Activated CD8-positive, alpha-beta T cell treated with anti-CD3 and anti-CD28 coated beads for 36 hours (primary cell): ENCODE measurements at regions of chr22 and their contacts with region 1.

Region 1: GRCh38 chr22:20783844-20784723 is 10.2 kb downstream of the SERPIND1 start:
- DNase-seq: peak; percentile 72
- ATAC-seq: peak; percentile 70
- H3K4me3 Mint-ChIP-seq: no peak overlapping the region
- H3K27ac Mint-ChIP-seq: no peak overlapping the region
- H3K4me1 Mint-ChIP-seq: peaks cover 18% of the 10 kb centered on the region
- H3K27me3 Mint-ChIP-seq: no peaks in the 10 kb centered on the region
- CTCF ChIP-seq: peak; percentile 64

Region 2: DNA sequence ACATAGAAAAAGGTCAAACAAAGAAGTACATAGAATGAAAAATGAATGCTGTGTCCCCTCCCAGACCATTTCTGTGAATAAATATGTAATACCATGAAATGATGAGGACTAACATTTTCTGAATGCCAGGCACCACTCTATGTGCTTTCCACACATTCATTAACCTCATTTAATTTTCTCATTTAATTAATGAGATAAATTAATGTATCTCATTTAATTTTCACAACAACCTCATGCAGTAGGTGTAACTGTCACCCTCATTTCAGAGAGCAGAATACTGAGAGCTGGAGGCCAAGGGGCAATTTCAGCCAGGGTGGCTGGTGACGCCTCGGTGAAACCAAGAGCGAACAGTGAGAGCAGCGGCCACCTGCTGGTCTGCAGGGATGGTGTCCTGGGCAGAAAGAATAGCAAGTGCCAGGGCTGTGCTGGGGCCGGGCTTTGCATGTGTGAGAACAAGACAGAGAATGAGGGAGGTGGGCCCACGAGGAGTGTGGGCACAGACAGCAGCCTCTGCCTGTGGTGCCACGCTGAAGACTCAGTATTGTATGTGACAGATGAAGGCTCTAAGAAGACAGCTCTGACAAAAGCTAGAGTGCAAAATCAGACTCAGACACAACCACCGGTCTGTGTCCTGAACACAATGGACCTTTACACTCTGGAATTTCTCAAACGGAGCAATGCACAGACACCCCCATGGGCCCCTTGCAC is 12.0 kb before region 1 on chr22:
- CTCF ChIA-PET with region 1: interaction called, 25 read pairs
- POLR2A ChIA-PET with region 1: interaction called, 3 read pairs
- intact Hi-C with region 1: no loop called
- DNase-seq: no peak
- ATAC-seq: no peak
- H3K4me3 Mint-ChIP-seq: no peak overlapping the region
- H3K27ac Mint-ChIP-seq: no peak overlapping the region
- H3K4me1 Mint-ChIP-seq: no peaks in the 10 kb centered on the region
- H3K27me3 Mint-ChIP-seq: no peaks in the 10 kb centered on the region
- CTCF ChIP-seq: no peak

Region 3: GRCh38 chr22:20799460-20799859 is 15.4 kb after region 1 on chr22:
- CTCF ChIA-PET with region 1: interaction called, 57 read pairs
- POLR2A ChIA-PET with region 1: interaction called, 3 read pairs
- intact Hi-C with region 1: no loop called
- DNase-seq: no peak
- ATAC-seq: no peak
- H3K4me3 Mint-ChIP-seq: no peak overlapping the region
- H3K27ac Mint-ChIP-seq: no peak overlapping the region
- H3K4me1 Mint-ChIP-seq: no peaks in the 10 kb centered on the region
- H3K27me3 Mint-ChIP-seq: no peaks in the 10 kb centered on the region
- CTCF ChIP-seq: no peak

Region 4: GRCh38 chr22:20844055-20845037 is 60.3 kb after region 1 on chr22:
- CTCF ChIA-PET with region 1: no interaction called
- POLR2A ChIA-PET with region 1: no interaction called
- intact Hi-C with region 1: no loop called
- DNase-seq: no peak
- ATAC-seq: no peak
- H3K4me3 Mint-ChIP-seq: no peak overlapping the region
- H3K27ac Mint-ChIP-seq: no peak overlapping the region
- H3K4me1 Mint-ChIP-seq: peaks cover 47% of the 10 kb centered on the region
- H3K27me3 Mint-ChIP-seq: no peaks in the 10 kb centered on the region
- CTCF ChIP-seq: no peak